ENCODE measurements at regions of chr3 and their contacts with region 1.

Region 1: DNA sequence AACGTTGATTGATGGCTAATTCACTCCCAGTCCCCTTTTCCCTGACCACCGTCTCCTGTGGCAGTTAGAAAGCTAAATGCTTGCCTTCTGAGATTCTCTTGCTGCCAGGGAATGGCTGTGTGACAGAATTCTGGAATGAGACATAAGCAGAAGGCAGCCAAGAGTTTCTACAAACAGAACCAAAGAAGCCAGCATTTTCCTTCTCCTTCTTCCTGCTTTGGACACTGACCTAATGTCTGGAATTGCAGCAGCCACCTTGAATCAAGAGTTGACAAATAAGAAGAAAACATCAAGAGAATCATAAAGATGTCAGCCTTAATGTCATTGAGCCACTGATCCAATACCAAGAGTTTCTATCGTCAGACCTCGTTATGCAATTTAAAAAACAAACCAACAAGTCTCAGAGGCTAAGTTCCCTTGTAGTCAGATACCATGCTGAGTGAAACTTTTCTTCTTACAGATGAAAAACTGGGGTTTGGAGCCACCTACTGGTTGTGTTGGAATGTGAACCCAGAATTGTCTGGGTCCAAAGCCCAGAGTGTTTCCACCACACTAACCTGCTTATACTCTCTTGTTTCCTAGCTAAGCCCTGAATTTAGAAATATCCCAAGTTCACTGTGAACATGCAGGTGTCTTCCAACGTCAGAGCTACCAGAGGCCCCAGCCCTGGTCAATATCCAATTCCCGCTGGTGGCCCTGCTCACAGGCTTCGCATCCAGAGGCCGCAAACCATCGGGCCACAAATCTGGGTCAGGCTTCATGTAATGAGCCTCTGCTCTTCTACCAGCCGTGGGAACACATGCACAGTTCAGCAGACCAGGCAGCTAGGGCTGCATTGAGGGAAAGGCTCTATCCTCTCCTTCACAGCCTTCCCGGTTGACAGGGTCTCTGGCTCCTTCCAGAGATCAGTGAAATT is 42.5 kb downstream of the MCF2L2 start:
- DNase-seq: peak in 4 of 10 donors; percentile 18 to 58 (median 40)
- H3K4me3 ChIP-seq: no peak overlapping the region
- H3K27ac ChIP-seq: peak overlapping the region in 52 of 59 donors; percentile 1 to 88 (median 54)
- H3K27me3 ChIP-seq: no peaks in the 10 kb centered on the region
- CTCF ChIP-seq: peak; percentile 52 to 90 (median 78)

Region 2: DNA sequence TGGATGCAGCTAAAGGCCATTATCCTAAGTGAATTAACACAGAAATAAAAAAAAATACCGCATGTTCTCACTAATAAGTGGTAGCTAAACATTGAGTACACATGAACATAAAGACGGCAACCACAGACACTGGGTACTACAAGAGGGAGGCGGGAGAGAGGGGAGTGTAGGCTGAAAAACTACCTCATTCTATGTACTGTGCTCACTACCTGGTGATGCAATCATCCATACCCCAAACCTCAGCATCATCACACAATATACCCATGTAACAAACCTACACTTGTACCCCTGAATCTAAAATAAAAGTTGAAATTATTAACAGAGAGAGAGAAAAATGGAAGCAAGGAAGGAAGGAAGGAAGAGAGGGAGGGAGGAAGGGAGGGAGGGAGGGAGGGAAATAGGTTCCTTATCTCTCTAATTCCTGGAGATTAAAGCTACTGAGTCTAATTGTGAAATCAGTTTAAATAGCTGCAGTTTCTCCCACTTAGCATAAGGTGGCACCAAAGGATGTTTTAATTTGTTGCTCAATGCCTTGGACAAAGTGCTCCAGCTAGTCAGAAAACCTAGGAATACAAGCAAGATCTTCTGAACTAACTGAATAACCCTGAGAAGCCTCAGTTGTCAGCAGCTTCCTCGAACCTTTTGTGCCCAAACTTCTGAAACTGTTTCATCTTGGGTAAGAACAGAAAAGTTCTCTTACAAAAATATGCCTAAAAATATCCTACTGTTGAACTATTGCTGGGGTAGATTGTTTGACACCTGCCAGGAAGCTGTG is 672.0 kb before region 1 on chr3:
- intact Hi-C with region 1: loop called in 1 of 2 experiments (anchors 10 kb)
- DNase-seq: no peak
- H3K4me3 ChIP-seq: no peak overlapping the region
- H3K27ac ChIP-seq: no peak overlapping the region
- H3K27me3 ChIP-seq: peaks cover 0 to 3% (median 0%) of the 10 kb centered on the region in 45 donors
- CTCF ChIP-seq: peak; percentile 43 to 83 (median 65)

Region 3: GRCh38 chr3:183180105-183180783 is 205.7 kb before region 1 on chr3:
- intact Hi-C with region 1: loop called (anchors 1 to 5 kb)
- DNase-seq: peak in 1 of 10 donors; percentile 17
- H3K4me3 ChIP-seq: peak overlapping the region in 57 of 59 donors; percentile 15 to 83 (median 70)
- H3K27ac ChIP-seq: peak overlapping the region in 12 of 59 donors; percentile 4 to 86 (median 52)
- H3K27me3 ChIP-seq: no peaks in the 10 kb centered on the region
- CTCF ChIP-seq: no peak

Region 4: GRCh38 chr3:183295238-183295637 is 90.7 kb before region 1 on chr3:
- intact Hi-C with region 1: no loop called
- DNase-seq: peak in 1 of 10 donors; percentile 34
- H3K4me3 ChIP-seq: no peak overlapping the region
- H3K27ac ChIP-seq: no peak overlapping the region
- H3K27me3 ChIP-seq: no peaks in the 10 kb centered on the region
- CTCF ChIP-seq: no peak

Region 5: DNA sequence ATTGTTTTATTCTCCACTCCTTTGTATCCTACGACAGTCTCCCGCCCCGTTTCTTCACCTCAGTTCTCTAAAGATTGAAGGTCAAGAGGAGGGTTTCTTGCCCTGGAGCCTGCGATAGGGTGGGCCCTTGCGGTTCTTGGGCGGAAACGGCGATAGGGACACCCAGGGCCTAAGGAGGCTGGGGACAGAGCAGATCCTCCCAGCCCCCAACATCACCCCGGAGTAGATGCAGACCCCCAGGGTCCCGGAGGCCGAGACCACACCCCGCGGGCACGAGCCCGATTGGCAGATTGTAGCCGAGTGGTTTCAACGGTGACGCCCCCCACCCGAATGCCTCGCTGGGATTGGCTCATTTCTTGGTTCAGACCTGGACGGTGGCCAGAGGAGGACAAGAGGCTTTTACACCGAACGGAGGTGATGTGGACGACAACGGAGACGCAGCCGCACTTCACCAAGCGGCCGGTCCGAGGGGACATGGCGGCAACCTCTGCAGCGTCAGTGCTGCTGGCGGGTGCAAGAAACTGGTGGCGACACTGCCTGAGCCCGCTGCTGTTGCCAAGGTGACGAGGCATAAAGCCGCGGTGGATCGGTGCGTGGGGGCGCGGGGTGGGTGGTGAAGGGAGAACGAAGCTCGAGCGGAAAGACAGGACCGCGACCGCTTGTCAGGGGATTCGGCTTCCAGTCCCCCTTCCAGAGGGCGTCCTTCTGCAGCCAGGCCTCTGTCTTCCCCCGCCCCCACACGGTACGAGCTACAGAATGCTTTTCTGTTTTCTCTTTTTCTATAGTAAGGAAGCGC is 61.4 kb after region 1 on chr3:
- intact Hi-C with region 1: loop called (anchors 5 to 10 kb)
- DNase-seq: peak; percentile 69 to 93 (median 88)
- H3K4me3 ChIP-seq: peak overlapping the region; percentile 48 to 93 (median 80)
- H3K27ac ChIP-seq: peak overlapping the region; percentile 57 to 97 (median 90)
- H3K27me3 ChIP-seq: no peaks in the 10 kb centered on the region
- CTCF ChIP-seq: peak in 35 of 56 donors; percentile 7 to 56 (median 30)

Region 6: GRCh38 chr3:183878071-183878470 is 492.1 kb after region 1 on chr3:
- intact Hi-C with region 1: no loop called
- DNase-seq: no peak
- H3K4me3 ChIP-seq: no peak overlapping the region
- H3K27ac ChIP-seq: no peak overlapping the region
- H3K27me3 ChIP-seq: no peaks in the 10 kb centered on the region
- CTCF ChIP-seq: no peak

Region 7: DNA sequence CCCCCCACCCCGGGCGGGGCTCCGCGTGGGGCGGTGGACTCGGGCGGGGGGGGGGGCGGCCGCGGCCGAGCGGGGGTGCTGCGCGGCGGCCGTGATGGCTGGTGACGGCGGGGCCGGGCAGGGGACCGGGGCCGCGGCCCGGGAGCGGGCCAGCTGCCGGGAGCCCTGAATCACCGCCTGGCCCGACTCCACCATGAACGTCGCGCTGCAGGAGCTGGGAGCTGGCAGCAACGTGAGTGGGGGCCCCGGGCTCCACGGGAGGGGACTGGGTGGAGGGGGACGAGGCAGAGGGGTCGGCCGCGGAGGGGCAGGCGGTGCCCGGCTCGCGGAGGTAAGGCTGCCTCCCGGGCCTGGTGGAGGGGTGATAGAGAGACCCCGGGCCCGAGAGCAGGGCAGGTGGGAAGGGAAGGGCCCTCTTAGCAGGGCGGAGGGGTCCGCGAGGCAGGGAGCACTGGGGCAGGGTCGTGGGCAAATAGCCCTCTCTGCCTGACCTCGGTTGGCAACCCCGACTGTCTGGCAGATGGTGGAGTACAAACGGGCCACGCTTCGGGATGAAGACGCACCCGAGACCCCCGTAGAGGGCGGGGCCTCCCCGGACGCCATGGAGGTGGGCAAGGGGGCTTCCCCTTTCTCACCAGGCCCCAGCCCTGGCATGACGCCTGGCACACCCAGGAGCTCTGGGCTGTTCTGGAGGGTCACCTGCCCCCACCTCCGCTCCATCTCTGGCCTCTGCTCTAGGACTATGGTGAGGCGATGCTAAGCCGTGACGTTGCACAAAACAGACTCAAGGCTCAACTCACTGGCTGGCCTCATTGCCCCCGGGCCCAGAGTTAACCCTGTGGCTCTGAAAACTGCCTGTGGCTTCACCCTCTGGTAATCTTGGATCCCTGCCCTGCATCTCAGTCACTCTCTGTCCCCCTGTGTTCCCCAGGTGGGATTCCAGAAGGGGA is 890.3 kb after region 1 on chr3 and contains the start of gene ECE2:
- intact Hi-C with region 1: no loop called
- DNase-seq: peak in 3 of 10 donors; percentile 47 to 51 (median 48)
- H3K4me3 ChIP-seq: peak within 1 kb of the TSS in 56 of 59 donors; percentile 15 to 64 (median 48)
- H3K27ac ChIP-seq: peak within 1 kb of the TSS in 42 of 59 donors; percentile 2 to 90 (median 64)
- H3K27me3 ChIP-seq: peaks cover 0 to 27% (median 0%) of the 10 kb centered on the region in 45 donors
- CTCF ChIP-seq: no peak
- total RNA-seq, gene ECE2: 2.6 to 38.7 (median 18.0) TPM